HCT116 (cell line): ENCODE measurements at regions of chr7 and their contacts with region 1.

Region 1: GRCh38 chr7:91182819-91183764 is 81.1 kb upstream of the FZD1 start:
- DNase-seq: no peak
- ATAC-seq: no peak
- H3K4me3 ChIP-seq: no peak overlapping the region
- H3K27ac ChIP-seq: no peak overlapping the region
- H3K4me1 ChIP-seq: no peaks in the 10 kb centered on the region
- H3K27me3 ChIP-seq: no peaks in the 10 kb centered on the region
- CTCF ChIP-seq: no peak
- POLR2A ChIP-seq: no peak
- RAD21 ChIP-seq: no peak

Region 2: GRCh38 chr7:91165846-91166230 is 17.3 kb before region 1 on chr7:
- CTCF ChIA-PET with region 1: no interaction called
- POLR2A ChIA-PET with region 1: no interaction called
- RAD21 ChIA-PET with region 1: no interaction called
- intact Hi-C with region 1: loop called (anchors 1 kb)
- DNase-seq: no peak
- ATAC-seq: no peak
- H3K4me3 ChIP-seq: no peak overlapping the region
- H3K27ac ChIP-seq: no peak overlapping the region
- H3K4me1 ChIP-seq: no peaks in the 10 kb centered on the region
- H3K27me3 ChIP-seq: no peaks in the 10 kb centered on the region
- CTCF ChIP-seq: no peak
- POLR2A ChIP-seq: no peak
- RAD21 ChIP-seq: no peak